HCT116 (cell line): ENCODE measurements at regions of chr6 and their contacts with region 1.

Region 1: DNA sequence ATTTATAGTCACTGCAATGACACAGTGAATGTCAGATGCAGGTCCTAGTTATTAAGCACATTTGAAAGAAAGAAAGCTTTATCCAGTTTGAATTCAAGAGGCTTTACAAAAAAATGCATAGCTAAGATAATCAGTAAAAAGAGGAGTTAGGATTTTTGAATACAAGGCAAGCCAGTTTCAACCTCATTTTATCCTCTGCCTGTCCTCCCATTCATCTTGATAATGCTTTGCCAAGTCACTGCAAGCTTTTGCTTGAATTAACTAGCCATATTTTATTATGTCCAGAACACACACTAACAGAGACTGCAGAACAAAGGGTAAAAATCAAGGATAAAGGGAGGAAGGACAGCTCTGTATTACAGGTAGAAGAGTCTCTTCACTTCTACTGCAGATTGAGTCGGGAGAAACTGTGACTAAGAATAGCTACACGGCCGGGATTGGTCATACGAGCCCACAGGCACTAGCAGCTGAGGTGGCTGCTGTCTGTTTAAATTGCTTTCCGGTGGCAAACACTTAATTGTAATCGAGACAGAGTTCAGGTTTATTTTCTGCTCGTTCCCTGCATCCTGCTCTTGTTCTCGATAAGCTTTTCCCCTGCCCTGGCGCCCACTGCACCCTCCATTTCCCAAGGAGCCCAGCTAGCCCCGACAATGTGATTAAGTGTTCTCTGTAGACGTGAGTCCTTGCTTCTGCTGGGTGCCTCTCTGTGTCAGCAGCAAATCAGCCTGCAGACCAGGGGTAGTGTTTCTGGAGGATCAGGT is 30.5 kb upstream of the AKAP12 start:
- DNase-seq: peak; percentile 53
- ATAC-seq: peak; percentile 78
- H3K4me3 ChIP-seq: peak overlapping the region; percentile 23 to 51
- H3K27ac ChIP-seq: peak overlapping the region; percentile 34
- H3K4me1 ChIP-seq: peaks cover 9 to 39% of the 10 kb centered on the region in 2 experiments
- H3K27me3 ChIP-seq: no peaks in the 10 kb centered on the region
- CTCF ChIP-seq: no peak
- POLR2A ChIP-seq: no peak
- RAD21 ChIP-seq: peak; percentile 24

Region 2: DNA sequence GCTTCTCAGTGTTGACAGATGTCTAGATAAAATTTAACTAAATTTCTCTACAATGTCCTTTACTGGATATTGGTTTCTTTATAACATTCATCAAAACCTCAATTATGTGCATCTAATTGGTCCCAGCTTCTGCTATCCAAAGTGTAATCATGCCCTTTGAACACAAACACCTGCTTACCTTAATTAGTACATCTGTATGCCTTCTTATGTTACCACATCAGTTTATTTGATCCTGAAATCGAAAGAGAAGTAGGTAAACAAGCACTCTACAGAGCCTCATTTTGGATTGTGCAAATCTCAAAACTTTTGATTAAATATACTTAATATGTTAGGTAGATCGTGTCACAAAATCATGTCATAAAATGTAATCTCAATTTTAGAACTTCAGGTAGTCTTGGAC is 1855.2 kb before region 1 on chr6:
- CTCF ChIA-PET with region 1: no interaction called
- POLR2A ChIA-PET with region 1: no interaction called
- RAD21 ChIA-PET with region 1: no interaction called
- intact Hi-C with region 1: no loop called
- DNase-seq: no peak
- ATAC-seq: no peak
- H3K4me3 ChIP-seq: no peak overlapping the region
- H3K27ac ChIP-seq: no peak overlapping the region
- H3K4me1 ChIP-seq: no peaks in the 10 kb centered on the region
- H3K27me3 ChIP-seq: no peaks in the 10 kb centered on the region
- CTCF ChIP-seq: no peak
- POLR2A ChIP-seq: no peak
- RAD21 ChIP-seq: no peak

Region 3: GRCh38 chr6:151128763-151129370 is 80.4 kb before region 1 on chr6:
- CTCF ChIA-PET with region 1: no interaction called
- POLR2A ChIA-PET with region 1: no interaction called
- RAD21 ChIA-PET with region 1: no interaction called
- intact Hi-C with region 1: loop called (anchors 5 kb)
- DNase-seq: no peak
- ATAC-seq: no peak
- H3K4me3 ChIP-seq: no peak overlapping the region
- H3K27ac ChIP-seq: no peak overlapping the region
- H3K4me1 ChIP-seq: peaks cover 20 to 50% of the 10 kb centered on the region in 2 experiments
- H3K27me3 ChIP-seq: no peaks in the 10 kb centered on the region
- CTCF ChIP-seq: no peak
- POLR2A ChIP-seq: no peak
- RAD21 ChIP-seq: no peak

Region 4: GRCh38 chr6:151154418-151154817 is 54.8 kb before region 1 on chr6:
- CTCF ChIA-PET with region 1: no interaction called
- POLR2A ChIA-PET with region 1: no interaction called
- RAD21 ChIA-PET with region 1: no interaction called
- intact Hi-C with region 1: no loop called
- DNase-seq: no peak
- ATAC-seq: peak; percentile 60
- H3K4me3 ChIP-seq: no peak overlapping the region
- H3K27ac ChIP-seq: no peak overlapping the region
- H3K4me1 ChIP-seq: peaks cover 5 to 14% of the 10 kb centered on the region in 2 experiments; a peak in 3 of 4 replicates
- H3K27me3 ChIP-seq: no peaks in the 10 kb centered on the region
- CTCF ChIP-seq: no peak
- POLR2A ChIP-seq: no peak
- RAD21 ChIP-seq: no peak

Region 5: DNA sequence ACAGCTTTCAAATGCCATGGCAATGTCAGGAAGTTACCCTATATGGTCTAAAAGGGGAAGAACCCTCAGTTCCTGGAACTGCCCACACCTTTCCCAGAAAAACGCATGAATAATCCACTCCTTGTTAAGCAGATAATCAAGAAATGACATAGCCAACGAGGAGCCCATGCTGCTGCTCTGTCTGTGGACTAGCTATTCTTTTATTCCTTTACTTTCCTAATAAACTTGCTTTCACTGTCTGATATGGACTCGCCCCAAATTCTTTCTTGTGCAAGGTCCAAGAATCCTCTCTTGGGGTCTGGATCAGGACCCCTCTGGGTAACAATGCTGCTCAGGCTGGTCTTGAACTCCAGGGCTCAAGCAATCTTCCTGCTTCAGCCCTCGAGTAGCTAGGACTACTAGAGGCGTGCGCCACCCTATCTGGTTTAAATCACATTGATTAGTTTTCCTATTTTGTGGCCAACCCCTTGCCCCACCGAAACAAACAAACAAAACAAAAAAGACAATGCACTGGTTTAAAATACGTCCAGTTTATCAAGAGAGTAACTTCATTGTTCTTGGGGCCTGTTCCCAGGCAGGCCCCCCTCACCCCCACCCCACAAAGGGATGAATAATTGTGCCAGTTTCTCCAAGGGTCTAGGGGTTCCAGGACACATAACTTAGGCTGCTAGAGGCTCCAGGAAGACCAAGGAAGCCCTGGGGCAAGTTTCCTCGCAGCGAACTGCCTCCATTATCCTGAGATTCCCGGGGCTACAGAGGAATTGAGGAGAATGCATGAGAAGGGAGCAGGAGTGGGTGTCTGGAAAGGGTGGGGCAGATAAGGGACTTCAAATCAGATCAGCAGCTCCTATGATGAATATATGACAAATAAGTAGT is 20.4 kb after region 1 on chr6:
- CTCF ChIA-PET with region 1: no interaction called
- POLR2A ChIA-PET with region 1: no interaction called
- RAD21 ChIA-PET with region 1: interaction called in 1 of 2 experiments, 3 read pairs
- intact Hi-C with region 1: loop called (anchors 1 kb)
- DNase-seq: no peak
- ATAC-seq: no peak
- H3K4me3 ChIP-seq: no peak overlapping the region
- H3K27ac ChIP-seq: no peak overlapping the region
- H3K4me1 ChIP-seq: no peaks in the 10 kb centered on the region; a peak in 1 of 4 replicates
- H3K27me3 ChIP-seq: no peaks in the 10 kb centered on the region
- CTCF ChIP-seq: no peak
- POLR2A ChIP-seq: no peak
- RAD21 ChIP-seq: no peak